Activated naive CD4-positive, alpha-beta T cell treated with anti-CD3 and anti-CD28 coated beads for 36 hours (primary cell): ENCODE measurements at regions of chr17 and their contacts with region 1.

Region 1: GRCh38 chr17:46154151-46154816 is 38.9 kb downstream of the KANSL1 start:
- DNase-seq: peak; percentile 61
- H3K4me3 Mint-ChIP-seq: peak overlapping the region; percentile 38
- H3K27ac Mint-ChIP-seq: peak overlapping the region; percentile 59
- H3K4me1 Mint-ChIP-seq: peaks cover 89% of the 10 kb centered on the region
- H3K27me3 Mint-ChIP-seq: no peaks in the 10 kb centered on the region

Region 2: GRCh38 chr17:45834471-45835396 is 319.6 kb before region 1 on chr17:
- CTCF ChIA-PET with region 1: no interaction called
- intact Hi-C with region 1: no loop called
- DNase-seq: no peak
- H3K4me3 Mint-ChIP-seq: no peak overlapping the region
- H3K27ac Mint-ChIP-seq: no peak overlapping the region
- H3K4me1 Mint-ChIP-seq: no peaks in the 10 kb centered on the region
- H3K27me3 Mint-ChIP-seq: no peaks in the 10 kb centered on the region

Region 3: GRCh38 chr17:46056800-46057304 is 97.4 kb before region 1 on chr17:
- CTCF ChIA-PET with region 1: interaction called, 3 read pairs
- intact Hi-C with region 1: loop called (anchors 1 kb)
- DNase-seq: no peak
- H3K4me3 Mint-ChIP-seq: no peak overlapping the region
- H3K27ac Mint-ChIP-seq: no peak overlapping the region
- H3K4me1 Mint-ChIP-seq: peaks cover 49% of the 10 kb centered on the region
- H3K27me3 Mint-ChIP-seq: no peaks in the 10 kb centered on the region

Region 4: DNA sequence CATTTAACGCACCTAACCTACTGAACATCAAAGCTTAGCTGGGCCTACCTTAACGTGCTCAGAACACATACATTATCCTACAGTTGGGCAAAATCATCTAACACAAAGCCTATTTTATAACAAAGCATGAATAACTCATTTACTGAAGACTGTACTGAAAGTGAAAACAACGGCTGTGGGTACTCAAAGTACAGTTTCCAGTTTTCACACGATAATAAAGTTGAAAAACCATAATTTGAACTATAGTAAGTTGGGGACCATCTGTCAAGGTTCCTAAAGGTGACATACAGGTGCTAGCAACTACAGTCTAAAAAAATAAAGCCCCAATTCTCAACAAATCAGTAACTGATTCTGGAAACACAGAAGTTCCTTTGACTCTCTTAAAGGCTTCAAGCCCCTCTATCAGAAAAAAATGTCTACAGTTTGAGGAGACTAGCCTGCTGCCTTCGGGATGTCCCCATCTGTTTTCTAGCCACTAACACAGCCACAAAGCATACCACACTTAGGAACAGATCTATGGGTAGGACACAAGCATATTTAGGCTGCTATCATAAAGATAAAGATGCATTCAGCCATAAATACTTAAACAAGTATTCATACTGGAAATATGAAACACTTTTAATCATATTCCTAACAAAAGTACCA is 32.3 kb before region 1 on chr17:
- CTCF ChIA-PET with region 1: interaction called, 3 read pairs
- intact Hi-C with region 1: loop called (anchors 5 kb)
- DNase-seq: no peak
- H3K4me3 Mint-ChIP-seq: peak overlapping the region; percentile 15
- H3K27ac Mint-ChIP-seq: peak overlapping the region; percentile 31
- H3K4me1 Mint-ChIP-seq: peaks cover 81% of the 10 kb centered on the region
- H3K27me3 Mint-ChIP-seq: no peaks in the 10 kb centered on the region

Region 5: GRCh38 chr17:46179375-46179999 is 25.2 kb after region 1 on chr17:
- CTCF ChIA-PET with region 1: interaction called, 4 read pairs
- intact Hi-C with region 1: loop called (anchors 1 kb)
- DNase-seq: no peak
- H3K4me3 Mint-ChIP-seq: peak overlapping the region; percentile 42
- H3K27ac Mint-ChIP-seq: peak overlapping the region; percentile 77
- H3K4me1 Mint-ChIP-seq: peaks cover 91% of the 10 kb centered on the region
- H3K27me3 Mint-ChIP-seq: no peaks in the 10 kb centered on the region